ENCODE measurements at regions of chr6 and their contacts with region 1.

Region 1: DNA sequence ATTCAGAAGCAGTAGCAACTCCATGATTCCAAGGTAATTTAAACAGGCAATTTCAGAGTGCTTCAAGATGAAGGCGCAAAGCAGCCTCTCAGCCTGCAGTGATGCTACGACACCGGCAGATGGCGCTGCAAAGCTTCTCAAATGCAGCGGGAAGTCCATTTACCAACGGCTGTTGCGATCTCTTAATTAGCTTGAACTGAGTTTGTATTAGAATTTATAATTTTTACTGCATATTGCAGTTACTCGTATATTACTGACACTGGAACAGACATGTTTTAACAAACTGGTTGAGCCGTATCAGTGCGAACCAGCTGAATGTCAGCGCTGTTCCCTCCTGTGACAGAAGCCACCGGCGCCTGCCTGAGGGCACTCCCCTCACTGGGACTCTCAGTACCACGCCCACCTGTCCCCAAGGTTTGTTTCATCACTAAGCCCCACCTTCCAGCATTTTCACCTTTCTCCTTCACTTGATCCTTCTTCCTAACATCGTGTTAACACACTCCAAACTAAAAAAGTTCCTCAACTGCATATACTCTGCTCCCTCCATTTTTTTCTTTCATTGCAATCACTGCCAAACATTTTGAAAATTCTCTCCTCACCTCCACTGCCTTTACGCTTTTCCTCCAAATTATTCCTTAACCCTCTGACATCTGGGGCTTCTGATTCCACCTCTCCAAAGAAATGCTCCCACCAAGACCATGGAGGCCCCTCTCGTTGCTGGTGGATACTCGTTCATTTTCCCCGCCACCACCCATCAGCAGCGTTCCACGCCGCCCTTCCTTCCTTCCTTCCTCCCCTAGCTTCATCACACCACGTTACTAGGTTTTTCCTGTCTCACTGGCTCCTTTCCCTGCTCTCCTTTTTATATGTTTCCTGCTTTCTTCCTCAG is 14.5 kb downstream of the GNL1 start:
- DNase-seq: peak; percentile 77
- H3K4me3 ChIP-seq: peak overlapping the region; percentile 34
- H3K27ac ChIP-seq: no peak overlapping the region
- H3K27me3 ChIP-seq: no peaks in the 10 kb centered on the region
- CTCF ChIP-seq: peak; percentile 98

Region 2: DNA sequence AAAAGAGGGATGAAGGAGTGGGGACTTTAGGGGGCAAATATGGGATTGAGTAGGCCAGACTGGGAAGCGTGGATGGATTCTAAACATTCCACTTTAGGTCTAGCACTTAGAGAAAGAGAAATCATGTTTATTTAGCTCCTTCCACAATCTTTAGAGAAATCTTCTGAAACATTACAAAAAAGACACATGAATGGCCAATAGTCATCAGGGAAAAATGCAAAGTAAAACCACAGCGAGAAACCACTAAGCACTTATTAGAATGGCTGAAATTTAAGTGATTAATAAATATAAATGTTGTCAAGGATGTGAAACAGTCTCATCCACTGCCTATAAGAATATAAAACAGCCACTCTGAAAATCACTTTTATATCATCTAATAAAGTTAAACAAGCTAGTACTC is 552.5 kb before region 1 on chr6:
- CTCF ChIA-PET with region 1: no interaction called
- POLR2A ChIA-PET with region 1: no interaction called
- DNase-seq: no peak
- H3K4me3 ChIP-seq: no peak overlapping the region
- H3K27ac ChIP-seq: no peak overlapping the region
- H3K27me3 ChIP-seq: peaks cover 8% of the 10 kb centered on the region
- CTCF ChIP-seq: no peak

Region 3: GRCh38 chr6:30463651-30464618 is 77.8 kb before region 1 on chr6:
- CTCF ChIA-PET with region 1: interaction called, 10 read pairs
- POLR2A ChIA-PET with region 1: no interaction called
- DNase-seq: no peak
- H3K4me3 ChIP-seq: no peak overlapping the region
- H3K27ac ChIP-seq: no peak overlapping the region
- H3K27me3 ChIP-seq: peaks cover 87% of the 10 kb centered on the region
- CTCF ChIP-seq: no peak

Region 4: DNA sequence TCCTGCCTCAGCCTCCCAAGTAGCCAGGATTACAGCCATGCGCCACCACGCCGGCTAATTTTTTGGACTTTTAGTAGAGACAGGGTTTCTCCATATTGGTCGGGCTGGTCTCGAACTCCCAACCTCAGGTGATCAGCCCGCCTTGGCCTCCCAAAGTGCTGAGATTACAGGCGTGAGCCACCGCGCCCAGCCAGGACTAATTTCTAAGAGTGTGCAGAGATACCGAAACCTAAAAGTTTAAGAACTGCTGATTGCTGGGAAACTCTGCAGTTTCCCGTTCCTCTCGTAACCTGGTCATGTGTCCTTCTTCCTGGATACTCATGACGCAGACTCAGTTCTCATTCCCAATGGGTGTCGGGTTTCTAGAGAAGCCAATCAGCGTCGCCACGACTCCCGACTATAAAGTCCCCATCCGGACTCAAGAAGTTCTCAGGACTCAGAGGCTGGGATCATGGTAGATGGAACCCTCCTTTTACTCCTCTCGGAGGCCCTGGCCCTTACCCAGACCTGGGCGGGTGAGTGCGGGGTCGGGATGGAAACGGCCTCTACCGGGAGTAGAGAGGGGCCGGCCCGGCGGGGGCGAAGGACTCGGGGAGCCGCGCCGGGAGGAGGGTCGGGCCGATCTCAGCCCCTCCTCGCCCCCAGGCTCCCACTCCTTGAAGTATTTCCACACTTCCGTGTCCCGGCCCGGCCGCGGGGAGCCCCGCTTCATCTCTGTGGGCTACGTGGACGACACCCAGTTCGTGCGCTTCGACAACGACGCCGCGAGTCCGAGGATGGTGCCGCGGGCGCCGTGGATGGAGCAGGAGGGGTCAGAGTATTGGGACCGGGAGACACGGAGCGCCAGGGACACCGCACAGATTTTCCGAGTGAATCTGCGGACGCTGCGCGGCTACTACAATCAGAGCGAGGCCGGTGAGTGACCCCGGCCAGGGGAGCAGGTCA is 52.4 kb before region 1 on chr6 and contains the start of gene HLA-E:
- CTCF ChIA-PET with region 1: interaction called, 437 read pairs
- POLR2A ChIA-PET with region 1: interaction called, 3 read pairs
- DNase-seq: peak; percentile 99
- H3K4me3 ChIP-seq: peak within 1 kb of the TSS; percentile 96
- H3K27ac ChIP-seq: peak within 1 kb of the TSS; percentile 94
- H3K27me3 ChIP-seq: no peaks in the 10 kb centered on the region
- CTCF ChIP-seq: no peak
- polyA plus RNA-seq, gene HLA-E: 127 and 136 TPM in 2 replicates

Region 5: DNA sequence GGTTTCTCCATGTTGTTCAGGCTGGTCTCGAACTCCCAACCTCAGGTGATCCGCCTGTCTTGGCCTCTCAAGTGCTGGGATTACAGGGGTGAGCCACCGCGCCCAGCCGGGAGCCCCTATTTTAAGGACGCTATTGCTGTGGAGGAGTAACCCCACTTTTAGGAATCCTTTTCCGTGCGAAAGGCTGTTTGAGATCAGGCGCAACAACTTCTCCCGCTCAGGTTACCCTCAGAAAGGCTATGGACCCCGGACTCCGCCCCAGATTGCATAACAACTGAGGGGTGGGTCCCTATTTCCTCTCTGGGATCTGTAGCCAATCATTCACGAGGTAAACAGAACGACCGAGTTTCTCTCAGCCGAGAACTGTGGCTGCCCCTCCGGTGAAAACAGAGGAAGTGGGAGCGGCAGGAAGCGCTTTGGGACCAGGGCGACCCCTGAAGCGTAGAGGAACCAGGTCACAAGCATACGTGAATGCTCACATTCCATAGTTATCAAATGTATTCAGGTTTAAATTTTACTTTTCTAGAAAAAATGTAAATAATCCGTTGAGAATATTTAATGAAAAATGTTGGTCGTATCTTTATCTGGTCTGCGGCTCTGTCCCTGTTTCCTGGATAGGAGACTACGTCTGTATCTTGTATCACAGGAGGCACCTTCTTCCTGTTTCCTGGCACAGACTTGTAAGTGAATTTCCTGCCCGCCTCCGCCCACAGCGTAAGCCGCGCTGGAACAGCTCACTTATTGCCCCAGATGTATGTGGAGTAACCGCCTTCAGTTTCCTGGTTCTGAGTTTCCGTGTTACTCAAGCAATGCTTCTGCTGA is 25.6 kb before region 1 on chr6:
- CTCF ChIA-PET with region 1: interaction called, 18 read pairs
- POLR2A ChIA-PET with region 1: no interaction called
- DNase-seq: peak; percentile 86
- H3K4me3 ChIP-seq: peak overlapping the region; percentile 56
- H3K27ac ChIP-seq: peak overlapping the region; percentile 93
- H3K27me3 ChIP-seq: no peaks in the 10 kb centered on the region
- CTCF ChIP-seq: no peak

Region 6: GRCh38 chr6:30590994-30591393 is 49.2 kb after region 1 on chr6:
- CTCF ChIA-PET with region 1: interaction called, 21 read pairs
- POLR2A ChIA-PET with region 1: no interaction called
- DNase-seq: peak; percentile 48
- H3K4me3 ChIP-seq: no peak overlapping the region
- H3K27ac ChIP-seq: peak overlapping the region; percentile 66
- H3K27me3 ChIP-seq: no peaks in the 10 kb centered on the region
- CTCF ChIP-seq: no peak

Region 7: GRCh38 chr6:31087494-31088089 is 545.8 kb after region 1 on chr6:
- CTCF ChIA-PET with region 1: interaction called, 20 read pairs
- POLR2A ChIA-PET with region 1: no interaction called
- DNase-seq: peak; percentile 64
- H3K4me3 ChIP-seq: no peak overlapping the region
- H3K27ac ChIP-seq: no peak overlapping the region
- H3K27me3 ChIP-seq: no peaks in the 10 kb centered on the region
- CTCF ChIP-seq: peak; percentile 76

Measured in AG04450 (cell line).